HEK293T (cell line): ENCODE measurements at regions of chr2 and their contacts with region 1.

Region 1: GRCh38 chr2:119759451-119760236 is at the start of gene PTPN4:
- DNase-seq: peak; percentile 94

Region 2: GRCh38 chr2:119820275-119820674 is 60.6 kb after region 1 on chr2:
- CTCF ChIA-PET with region 1: interaction called, 5 read pairs
- POLR2A ChIA-PET with region 1: interaction called, 11 read pairs
- DNase-seq: peak; percentile 41

Region 3: DNA sequence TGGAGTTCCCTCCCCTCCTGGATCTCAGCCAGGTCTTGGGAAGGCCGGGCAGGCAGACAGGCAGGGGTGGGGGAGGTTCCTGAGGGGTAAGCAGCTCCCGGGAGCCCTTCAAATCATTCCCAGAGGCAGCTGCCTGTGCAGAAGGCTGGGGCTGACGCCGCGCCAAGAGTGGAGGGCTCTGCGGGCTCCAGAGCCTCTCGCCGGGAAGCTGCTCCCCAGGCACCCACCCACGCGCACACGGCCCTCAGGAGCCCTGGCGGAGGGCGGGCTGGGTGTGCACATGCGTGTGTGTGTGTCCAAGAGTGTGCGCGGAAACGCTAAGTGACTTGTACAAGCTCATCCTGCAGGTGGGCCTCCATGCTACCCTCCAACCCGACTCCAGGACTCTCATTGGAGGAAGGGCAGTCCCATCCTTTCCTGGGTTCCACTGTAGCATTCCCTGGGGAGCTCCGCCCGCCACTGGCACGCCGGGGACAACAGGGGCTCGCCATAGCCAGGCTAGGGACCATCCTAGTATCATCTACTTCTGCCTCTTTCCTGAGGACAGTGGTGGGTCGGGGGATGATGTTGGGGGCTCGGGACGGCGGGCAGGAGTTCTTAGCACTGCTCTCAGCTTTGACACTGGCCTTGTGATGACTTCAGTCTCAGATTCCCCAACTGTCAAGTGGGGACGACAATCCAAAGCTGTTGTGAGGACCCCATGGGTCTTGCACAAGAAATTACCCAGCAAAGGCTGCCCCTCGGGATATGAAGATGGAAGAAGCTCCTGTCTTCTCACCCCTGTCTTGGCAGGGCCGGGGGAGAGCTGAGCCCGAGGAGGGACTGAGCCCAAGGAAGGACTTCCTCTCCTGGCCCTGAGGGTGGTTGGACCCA is 636.6 kb after region 1 on chr2:
- CTCF ChIA-PET with region 1: no interaction called
- POLR2A ChIA-PET with region 1: no interaction called
- DNase-seq: peak; percentile 35